B cell (primary cell): ENCODE measurements at regions of chr9 and their contacts with region 1.

Region 1: GRCh38 chr9:129413537-129414376 is 207.1 kb downstream of the C9orf50 start:
- DNase-seq: peak; percentile 99
- ATAC-seq: peak; percentile 71
- H3K4me3 ChIP-seq: peak overlapping the region in 4 of 5 experiments; percentile 75 to 79 (median 77)
- H3K4me3 Mint-ChIP-seq: peak overlapping the region; percentile 91
- H3K27ac ChIP-seq: peak overlapping the region; percentile 99
- H3K27ac Mint-ChIP-seq: peak overlapping the region; percentile 100
- H3K4me1 ChIP-seq: peaks cover 18 to 25% of the 10 kb centered on the region in 2 donors
- H3K4me1 Mint-ChIP-seq: peaks cover 25% of the 10 kb centered on the region
- H3K27me3 ChIP-seq: no peaks in the 10 kb centered on the region
- H3K27me3 Mint-ChIP-seq: no peaks in the 10 kb centered on the region
- CTCF ChIP-seq: no peak

Region 2: GRCh38 chr9:129365196-129365595 is 48.6 kb before region 1 on chr9:
- CTCF ChIA-PET with region 1: no interaction called
- POLR2A ChIA-PET with region 1: no interaction called
- intact Hi-C with region 1: no loop called
- DNase-seq: no peak
- ATAC-seq: no peak
- H3K4me3 ChIP-seq: no peak overlapping the region
- H3K4me3 Mint-ChIP-seq: no peak overlapping the region
- H3K27ac ChIP-seq: no peak overlapping the region
- H3K27ac Mint-ChIP-seq: no peak overlapping the region
- H3K4me1 ChIP-seq: peaks cover 7 to 8% of the 10 kb centered on the region in 2 donors
- H3K4me1 Mint-ChIP-seq: peaks cover 5% of the 10 kb centered on the region
- H3K27me3 ChIP-seq: no peaks in the 10 kb centered on the region
- H3K27me3 Mint-ChIP-seq: peaks cover 18% of the 10 kb centered on the region
- CTCF ChIP-seq: no peak

Region 3: GRCh38 chr9:129487642-129488409 is 74.1 kb after region 1 on chr9:
- CTCF ChIA-PET with region 1: no interaction called
- POLR2A ChIA-PET with region 1: interaction called, 4 read pairs
- intact Hi-C with region 1: loop called (anchors 1 kb)
- DNase-seq: peak; percentile 69
- ATAC-seq: peak; percentile 13
- H3K4me3 ChIP-seq: peak overlapping the region; percentile 38 to 62 (median 49)
- H3K4me3 Mint-ChIP-seq: peak overlapping the region; percentile 89
- H3K27ac ChIP-seq: peak overlapping the region in 1 of 2 donors; percentile 63
- H3K27ac Mint-ChIP-seq: peak overlapping the region; percentile 90
- H3K4me1 ChIP-seq: peaks cover 24 to 28% of the 10 kb centered on the region in 2 donors
- H3K4me1 Mint-ChIP-seq: peaks cover 35% of the 10 kb centered on the region
- H3K27me3 ChIP-seq: peaks cover 0 to 38% (median 9%) of the 10 kb centered on the region in 4 experiments
- H3K27me3 Mint-ChIP-seq: peaks cover 15% of the 10 kb centered on the region
- CTCF ChIP-seq: no peak